Right ventricle myocardium superior (tissue), 1 donor: ENCODE measurements at regions of chr9 and their contacts with region 1.

Region 1: DNA sequence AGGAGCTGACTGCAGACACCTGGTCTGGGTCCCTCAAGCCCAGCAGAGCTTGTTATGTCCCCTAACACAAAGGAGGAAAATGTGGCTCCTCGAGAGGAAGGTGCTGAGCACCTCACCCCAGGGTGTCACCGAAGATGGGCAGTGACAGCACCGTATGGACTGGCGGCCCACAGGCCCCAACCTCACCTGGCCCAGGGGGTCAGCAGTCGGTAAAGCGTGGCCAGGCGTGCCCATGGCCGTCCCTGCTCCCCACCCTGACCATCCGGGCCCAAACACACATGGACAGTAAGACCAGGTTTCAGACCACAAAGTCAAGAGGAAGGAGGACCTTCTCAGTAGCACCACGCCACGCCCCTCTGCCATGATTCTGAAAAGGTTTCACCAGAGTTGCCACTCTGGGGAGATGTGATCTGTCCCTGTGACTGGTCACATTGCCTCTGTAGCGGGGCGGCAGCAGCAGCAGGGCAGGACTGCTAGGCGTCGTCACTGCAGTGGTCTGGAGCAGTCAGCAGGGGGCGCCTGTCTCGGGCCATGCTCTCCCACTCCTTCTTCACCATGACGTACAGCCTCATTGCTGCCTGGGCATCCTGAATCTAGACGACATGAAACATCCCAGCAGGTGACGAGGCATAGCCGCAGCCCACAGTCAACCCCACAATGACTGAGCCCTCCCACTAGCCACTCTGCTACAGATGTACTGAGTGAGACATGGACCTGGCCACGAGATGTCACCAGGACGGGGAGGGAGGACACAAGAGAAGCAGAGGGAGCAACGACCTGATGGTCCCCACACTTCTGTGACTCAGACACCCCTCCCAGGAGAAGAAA is 11.1 kb downstream of the REXO4 start:
- DNase-seq: peak; percentile 80
- ATAC-seq: peak; percentile 82

Region 2: GRCh38 chr9:133437753-133438531 is 31.2 kb after region 1 on chr9:
- intact Hi-C with region 1: no loop called
- DNase-seq: no peak
- ATAC-seq: no peak

Region 3: GRCh38 chr9:133485361-133486260 is 78.9 kb after region 1 on chr9:
- intact Hi-C with region 1: loop called (anchors 2 kb)
- DNase-seq: peak; percentile 26
- ATAC-seq: no peak